IMR-90 (cell line): ENCODE measurements at regions of chr2 and their contacts with region 1.

Region 1: GRCh38 chr2:127609031-127609751 is 36.8 kb upstream of the GPR17 start:
- DNase-seq: no peak
- ATAC-seq: no peak
- H3K4me3 ChIP-seq: no peak overlapping the region
- H3K27ac ChIP-seq: no peak overlapping the region
- H3K4me1 ChIP-seq: no peaks in the 10 kb centered on the region
- H3K27me3 ChIP-seq: peaks cover 19% of the 10 kb centered on the region
- CTCF ChIP-seq: no peak
- POLR2A ChIP-seq: no peak
- RAD21 ChIP-seq: no peak

Region 2: GRCh38 chr2:127623388-127624245 is 14.4 kb after region 1 on chr2:
- CTCF ChIA-PET with region 1: no interaction called
- POLR2A ChIA-PET with region 1: no interaction called
- dilution Hi-C with region 1: no loop called
- in situ Hi-C with region 1: no loop called
- intact Hi-C with region 1: loop called (anchors 2 kb)
- DNase-seq: peak; percentile 64
- ATAC-seq: peak; percentile 83
- H3K4me3 ChIP-seq: no peak overlapping the region
- H3K27ac ChIP-seq: no peak overlapping the region
- H3K4me1 ChIP-seq: peaks cover 5% of the 10 kb centered on the region
- H3K27me3 ChIP-seq: no peaks in the 10 kb centered on the region; the same call in 1 of the 2 replicates
- CTCF ChIP-seq: no peak
- POLR2A ChIP-seq: no peak
- RAD21 ChIP-seq: no peak

Region 3: GRCh38 chr2:127829845-127830246 is 220.7 kb after region 1 on chr2:
- CTCF ChIA-PET with region 1: no interaction called
- POLR2A ChIA-PET with region 1: no interaction called
- dilution Hi-C with region 1: no loop called
- in situ Hi-C with region 1: no loop called
- intact Hi-C with region 1: no loop called
- DNase-seq: no peak
- ATAC-seq: no peak
- H3K4me3 ChIP-seq: no peak overlapping the region
- H3K27ac ChIP-seq: no peak overlapping the region
- H3K4me1 ChIP-seq: no peaks in the 10 kb centered on the region
- H3K27me3 ChIP-seq: no peaks in the 10 kb centered on the region; the same call in 1 of the 2 replicates
- CTCF ChIP-seq: no peak
- POLR2A ChIP-seq: no peak
- RAD21 ChIP-seq: no peak